ENCODE measurements at regions of chr4 and their contacts with region 1.

Region 1: GRCh38 chr4:13248621-13249298 is 235.4 kb downstream of the RAB28 start:
- DNase-seq: no peak
- ATAC-seq: no peak
- H3K4me3 ChIP-seq: no peak overlapping the region
- H3K27ac ChIP-seq: no peak overlapping the region
- H3K4me1 ChIP-seq: no peaks in the 10 kb centered on the region
- H3K27me3 ChIP-seq: no peaks in the 10 kb centered on the region
- CTCF ChIP-seq: no peak

Region 2: GRCh38 chr4:13024147-13025105 is 224.3 kb before region 1 on chr4:
- intact Hi-C with region 1: no loop called
- DNase-seq: no peak
- ATAC-seq: no peak
- H3K4me3 ChIP-seq: no peak overlapping the region
- H3K27ac ChIP-seq: no peak overlapping the region
- H3K4me1 ChIP-seq: no peaks in the 10 kb centered on the region
- H3K27me3 ChIP-seq: no peaks in the 10 kb centered on the region
- CTCF ChIP-seq: no peak

Region 3: GRCh38 chr4:13108096-13108495 is 140.7 kb before region 1 on chr4:
- intact Hi-C with region 1: loop called in 1 of 2 experiments (anchors 2 kb)
- DNase-seq: no peak
- ATAC-seq: no peak
- H3K4me3 ChIP-seq: no peak overlapping the region
- H3K27ac ChIP-seq: no peak overlapping the region
- H3K4me1 ChIP-seq: no peaks in the 10 kb centered on the region
- H3K27me3 ChIP-seq: no peaks in the 10 kb centered on the region
- CTCF ChIP-seq: no peak

Region 4: DNA sequence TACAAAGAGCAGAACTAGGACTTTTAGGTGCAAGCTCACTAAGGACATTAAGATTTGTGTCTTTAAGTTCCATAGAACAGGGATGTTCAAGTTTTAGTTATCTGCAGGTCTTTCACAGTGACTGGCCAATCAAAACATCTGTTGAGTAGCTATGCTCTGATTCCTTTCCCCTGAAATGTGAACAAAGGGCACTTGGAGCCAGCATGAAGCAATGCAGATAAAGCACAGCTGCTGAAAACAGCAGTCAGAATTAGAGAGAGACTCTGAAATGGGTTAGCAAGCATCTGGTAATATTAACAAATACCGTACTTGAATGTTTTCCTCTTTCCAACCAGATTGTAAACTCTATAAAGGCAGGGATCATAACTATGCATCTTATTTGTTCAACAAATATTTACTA is 41.5 kb before region 1 on chr4:
- intact Hi-C with region 1: no loop called
- DNase-seq: no peak
- ATAC-seq: no peak
- H3K4me3 ChIP-seq: no peak overlapping the region
- H3K27ac ChIP-seq: no peak overlapping the region
- H3K4me1 ChIP-seq: no peaks in the 10 kb centered on the region
- H3K27me3 ChIP-seq: no peaks in the 10 kb centered on the region
- CTCF ChIP-seq: no peak